ENCODE measurements at regions of chr7 and their contacts with region 1.

Region 1: DNA sequence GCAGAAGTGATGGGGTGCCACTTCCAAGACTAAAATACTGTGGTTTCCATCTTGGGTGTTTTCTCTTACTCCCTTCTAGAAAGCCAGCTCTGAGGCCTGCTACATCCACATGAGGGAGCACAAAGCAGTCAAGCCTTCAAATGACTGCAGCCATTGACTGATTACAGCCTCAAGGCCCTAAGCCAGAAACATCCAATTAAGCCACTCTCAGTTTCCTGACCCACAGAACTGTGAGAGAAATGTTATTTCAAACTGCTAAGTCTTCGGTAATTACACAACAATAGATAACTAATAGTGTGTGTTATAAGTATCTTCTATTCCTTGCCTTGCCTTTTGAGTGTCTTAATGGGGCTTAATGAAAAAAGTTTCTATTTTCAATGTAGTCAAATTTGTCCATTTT is 24.8 kb downstream of the BRAF start:
- DNase-seq: no peak
- ATAC-seq: no peak
- H3K4me3 ChIP-seq: no peak overlapping the region
- H3K27ac ChIP-seq: peak overlapping the region; percentile 66; the same call in 1 of the 2 replicates
- H3K4me1 ChIP-seq: peaks cover 17% of the 10 kb centered on the region
- H3K27me3 ChIP-seq: no peaks in the 10 kb centered on the region
- CTCF ChIP-seq: no peak

Region 2: DNA sequence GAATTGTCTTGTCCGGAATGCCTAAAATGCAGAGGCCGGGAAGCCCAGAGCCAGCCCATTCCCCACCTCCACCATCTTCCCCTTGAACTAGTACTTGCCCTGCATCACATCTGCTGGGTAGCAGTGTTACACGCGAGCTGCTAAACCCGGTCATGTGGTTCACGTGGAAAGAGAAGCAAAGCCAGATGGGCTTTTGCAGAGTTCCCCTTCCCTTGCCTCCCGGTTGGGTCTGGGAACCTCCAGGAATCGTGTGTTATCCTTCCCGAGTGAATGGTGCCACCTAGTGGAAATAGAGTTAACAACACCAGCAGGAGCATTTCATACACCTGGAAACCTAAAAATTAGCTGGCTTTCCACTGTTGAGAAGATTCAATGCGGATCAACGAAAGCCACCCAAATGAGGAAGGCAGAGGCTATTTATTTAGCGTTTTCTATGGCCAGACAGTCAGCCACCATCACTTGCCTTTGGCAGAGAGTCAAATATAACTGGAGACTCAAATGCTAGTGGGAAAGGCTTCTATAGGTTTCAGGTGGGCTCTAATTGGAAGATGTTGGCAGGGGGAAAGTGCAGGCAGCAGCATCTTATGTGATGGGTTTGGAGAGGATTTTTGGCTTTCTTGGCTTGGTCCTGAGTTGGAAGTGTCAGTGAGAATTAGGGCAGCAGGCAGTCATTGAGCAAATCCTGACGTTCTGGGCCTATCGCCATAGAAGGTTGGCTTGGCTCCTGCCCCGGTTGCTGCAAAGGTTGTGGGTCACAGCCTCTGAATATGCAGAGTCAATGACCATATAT is 246.4 kb before region 1 on chr7:
- CTCF ChIA-PET with region 1: no interaction called
- POLR2A ChIA-PET with region 1: no interaction called
- intact Hi-C with region 1: no loop called
- DNase-seq: peak; percentile 87
- ATAC-seq: peak; percentile 68
- H3K4me3 ChIP-seq: no peak overlapping the region
- H3K27ac ChIP-seq: no peak overlapping the region
- H3K4me1 ChIP-seq: peaks cover 26% of the 10 kb centered on the region
- H3K27me3 ChIP-seq: no peaks in the 10 kb centered on the region
- CTCF ChIP-seq: peak; percentile 90

Region 3: DNA sequence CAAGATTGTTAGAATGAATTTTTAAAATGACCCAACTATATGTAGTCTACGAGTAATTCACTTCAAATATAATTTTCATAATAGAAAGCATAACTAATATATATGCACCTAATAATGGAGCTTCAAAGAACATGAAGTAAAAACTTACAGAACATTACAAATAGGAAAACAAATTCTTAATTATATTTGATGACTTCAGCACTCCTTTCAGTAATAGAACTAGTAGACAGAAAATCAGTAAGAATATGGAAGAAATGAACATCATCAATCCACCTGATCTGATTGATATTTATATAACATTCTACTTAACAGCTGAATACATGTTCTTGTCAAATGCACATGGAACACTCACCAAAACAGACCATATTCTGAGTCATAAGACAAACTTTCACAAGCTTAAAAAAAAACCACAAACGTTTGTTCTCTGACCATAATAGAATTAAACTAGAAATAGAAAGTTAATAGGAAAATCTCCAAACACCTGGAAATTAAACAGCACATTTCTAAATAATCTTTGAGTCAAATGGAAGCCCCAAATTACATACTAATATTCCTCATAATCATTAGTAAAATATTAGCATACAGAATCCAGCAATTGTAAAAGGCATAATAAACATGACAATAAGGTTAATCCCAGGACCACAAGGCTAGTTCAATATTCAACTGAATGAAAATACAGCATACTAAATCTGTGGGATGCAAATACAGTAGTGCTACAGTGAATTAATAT is 23.2 kb before region 1 on chr7:
- CTCF ChIA-PET with region 1: no interaction called
- POLR2A ChIA-PET with region 1: no interaction called
- intact Hi-C with region 1: loop called (anchors 2 kb)
- DNase-seq: peak; percentile 75
- ATAC-seq: peak; percentile 85
- H3K4me3 ChIP-seq: 0 out of 2 replicates have a peak overlapping the region, but pooled peaks have one; percentile 46
- H3K27ac ChIP-seq: peak overlapping the region; percentile 22
- H3K4me1 ChIP-seq: peaks cover 12% of the 10 kb centered on the region
- H3K27me3 ChIP-seq: no peaks in the 10 kb centered on the region
- CTCF ChIP-seq: no peak

Region 4: GRCh38 chr7:140914083-140914482 is 14.2 kb after region 1 on chr7:
- CTCF ChIA-PET with region 1: no interaction called
- POLR2A ChIA-PET with region 1: no interaction called
- intact Hi-C with region 1: loop called (anchors 2 kb)
- DNase-seq: peak; percentile 20
- ATAC-seq: 0 out of 2 replicates have a peak, but pooled peaks have one; percentile 9
- H3K4me3 ChIP-seq: peak overlapping the region; percentile 30
- H3K27ac ChIP-seq: peak overlapping the region; percentile 83
- H3K4me1 ChIP-seq: peaks cover 30% of the 10 kb centered on the region
- H3K27me3 ChIP-seq: no peaks in the 10 kb centered on the region
- CTCF ChIP-seq: no peak

Region 5: GRCh38 chr7:141256481-141256880 is 356.6 kb after region 1 on chr7:
- CTCF ChIA-PET with region 1: no interaction called
- POLR2A ChIA-PET with region 1: no interaction called
- intact Hi-C with region 1: no loop called
- DNase-seq: no peak
- ATAC-seq: no peak
- H3K4me3 ChIP-seq: no peak overlapping the region
- H3K27ac ChIP-seq: no peak overlapping the region
- H3K4me1 ChIP-seq: no peaks in the 10 kb centered on the region
- H3K27me3 ChIP-seq: peaks cover 24% of the 10 kb centered on the region
- CTCF ChIP-seq: no peak; the same call in 1 of the 2 replicates